ENCODE measurements at regions of chr1 and their contacts with region 1.

Region 1: GRCh38 chr1:66255900-66256299 is 278.1 kb upstream of the SGIP1 start:
- DNase-seq: no peak
- ATAC-seq: no peak

Region 2: GRCh38 chr1:66434096-66434495 is 178.2 kb after region 1 on chr1:
- intact Hi-C with region 1: no loop called
- DNase-seq: no peak
- ATAC-seq: no peak

Region 3: DNA sequence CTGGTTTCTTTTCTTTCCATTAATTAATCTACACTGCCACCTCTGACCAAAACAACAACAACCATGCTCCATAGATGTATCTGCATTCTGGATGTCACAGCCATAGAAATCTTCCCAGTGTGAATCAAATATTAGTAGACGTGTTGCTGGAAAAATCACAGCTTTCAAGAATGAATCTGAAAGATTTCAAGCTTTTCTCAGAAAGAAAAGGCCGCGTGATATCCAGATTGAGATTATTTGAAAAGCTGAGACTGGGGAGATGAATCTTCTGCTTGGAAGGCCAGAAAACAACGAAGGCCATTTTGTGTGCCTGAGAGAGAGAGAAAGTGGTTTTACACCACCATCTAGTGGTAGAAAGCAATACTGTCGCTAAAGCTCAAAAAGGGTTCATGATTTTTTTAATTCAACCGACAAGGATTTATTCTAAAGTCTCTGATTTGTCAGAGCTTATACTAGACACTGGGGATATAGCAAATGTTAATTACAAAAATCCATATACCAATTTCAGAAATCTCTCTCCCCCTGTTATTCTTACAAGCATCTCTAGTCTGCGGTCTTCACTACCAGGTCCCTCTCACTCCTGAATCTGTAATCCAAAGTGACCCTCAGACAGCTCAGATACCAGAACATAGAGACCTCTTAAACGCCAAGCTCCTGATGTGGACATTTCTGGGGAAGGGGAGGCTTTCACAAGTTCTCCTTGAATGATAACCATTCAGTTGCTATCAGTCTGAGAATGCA is 190.5 kb after region 1 on chr1:
- intact Hi-C with region 1: loop called (anchors 2 kb)
- DNase-seq: no peak
- ATAC-seq: peak; percentile 73

Region 4: DNA sequence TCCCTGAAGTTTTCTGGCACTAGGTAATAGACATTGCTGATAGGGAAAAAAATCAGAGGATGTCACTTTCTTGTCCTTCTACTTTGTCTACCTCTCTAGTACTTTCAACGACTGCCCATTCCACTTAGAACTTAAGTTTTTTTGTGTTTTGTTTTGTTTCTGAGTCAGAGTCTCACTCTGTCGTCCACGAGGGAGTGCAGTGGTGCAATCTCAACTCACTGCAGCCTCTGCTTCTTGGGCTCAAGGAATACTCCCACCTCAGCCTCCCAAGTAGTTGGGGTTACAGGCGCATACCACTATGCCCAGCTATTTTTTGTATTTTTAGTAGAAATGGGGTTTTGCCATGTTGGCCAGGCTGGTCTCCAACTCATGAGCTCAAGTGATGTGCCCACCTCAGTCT is 357.3 kb after region 1 on chr1:
- intact Hi-C with region 1: no loop called
- DNase-seq: no peak
- ATAC-seq: no peak

Measured in Right ventricle myocardium superior (tissue), 1 donor.